Activated CD4-positive, alpha-beta memory T cell treated with anti-CD3 and anti-CD28 coated beads for 36 hours (primary cell): ENCODE measurements at regions of chr2 and their contacts with region 1.

Region 1: DNA sequence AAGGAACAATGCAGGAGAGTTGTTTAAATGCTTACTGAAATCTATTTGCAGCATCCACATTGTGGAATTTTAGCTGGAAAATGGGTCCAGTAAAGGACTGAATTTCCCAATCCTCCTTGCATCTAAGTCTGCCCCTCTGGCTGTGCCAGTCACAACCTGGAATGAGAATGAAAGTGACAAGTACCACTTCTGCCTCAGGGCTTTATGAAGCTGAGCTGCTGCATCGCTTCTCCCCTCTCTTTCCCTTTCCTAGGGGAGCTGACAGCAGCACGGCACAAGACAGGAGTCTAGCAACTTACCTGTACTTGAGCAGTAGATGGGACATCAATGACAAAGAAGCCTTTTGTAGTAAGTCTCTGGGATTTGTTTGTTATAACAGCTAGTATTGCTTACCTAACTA is 27.3 kb upstream of the THSD7B start:
- DNase-seq: no peak
- H3K4me3 Mint-ChIP-seq: no peak overlapping the region
- H3K27ac Mint-ChIP-seq: no peak overlapping the region
- H3K4me1 Mint-ChIP-seq: no peaks in the 10 kb centered on the region
- H3K27me3 Mint-ChIP-seq: peaks cover 5% of the 10 kb centered on the region

Region 2: DNA sequence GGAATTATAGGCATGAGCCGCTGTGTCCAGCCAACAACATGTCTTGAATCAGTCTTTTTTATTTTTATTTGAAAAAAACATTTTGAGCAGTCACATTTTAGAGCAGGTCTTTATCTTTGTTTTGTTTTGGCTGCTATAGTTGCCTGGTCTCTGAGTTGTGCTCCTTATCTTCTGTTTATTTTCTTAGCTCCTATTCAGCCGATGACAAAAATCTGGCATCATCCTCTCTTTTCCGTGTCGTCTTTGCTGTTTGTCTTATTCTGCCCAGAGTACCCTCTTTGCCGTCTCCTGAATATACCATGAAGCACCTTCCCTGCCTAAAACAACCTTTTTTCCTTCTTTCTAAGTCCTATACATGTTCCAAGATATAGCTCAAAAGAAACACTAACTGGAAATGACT is 228.4 kb after region 1 on chr2:
- CTCF ChIA-PET with region 1: no interaction called
- POLR2A ChIA-PET with region 1: no interaction called
- intact Hi-C with region 1: loop called (anchors 10 kb)
- DNase-seq: no peak
- H3K4me3 Mint-ChIP-seq: no peak overlapping the region
- H3K27ac Mint-ChIP-seq: no peak overlapping the region
- H3K4me1 Mint-ChIP-seq: no peaks in the 10 kb centered on the region
- H3K27me3 Mint-ChIP-seq: no peaks in the 10 kb centered on the region